Right ventricle myocardium inferior (tissue), 1 donor: ENCODE measurements at regions of chr3 and their contacts with region 1.

Region 1: GRCh38 chr3:197002701-197003454 is 26.7 kb downstream of the MELTF start:
- DNase-seq: peak; percentile 90
- ATAC-seq: peak; percentile 88

Region 2: DNA sequence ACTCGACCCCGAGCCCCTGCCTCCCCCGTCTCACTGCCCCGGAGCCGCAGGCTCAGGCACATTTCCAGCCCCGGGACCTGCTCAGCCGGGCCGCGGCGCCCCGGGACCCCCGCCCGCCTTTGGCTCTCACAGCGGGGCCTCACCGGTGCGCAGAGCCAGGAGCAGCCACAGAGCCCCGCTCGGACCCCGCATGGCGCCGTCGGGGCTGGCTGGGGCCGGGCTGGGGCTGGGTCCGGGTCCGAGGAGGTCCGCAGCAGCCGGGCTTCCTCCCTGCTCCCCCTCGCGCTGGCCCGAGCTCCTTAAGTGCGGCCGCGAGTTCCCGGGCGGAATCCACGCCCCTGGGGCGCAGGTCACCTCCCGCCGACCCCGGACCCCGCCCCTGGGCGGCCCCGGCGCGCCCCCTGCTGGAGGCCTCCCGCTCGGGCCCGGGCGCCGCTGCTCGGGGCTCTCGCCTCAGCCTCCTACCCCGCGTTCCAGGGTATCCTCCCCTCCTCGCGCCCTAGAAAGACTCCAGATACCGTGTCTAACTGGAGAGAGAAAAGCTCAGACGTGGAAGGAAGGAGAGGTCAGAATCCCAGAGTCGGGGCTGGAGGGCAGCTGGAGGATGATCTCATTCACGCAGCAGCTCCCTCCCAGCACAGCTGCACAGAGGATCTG is 26.8 kb after region 1 on chr3 and contains the start of gene MELTF:
- intact Hi-C with region 1: loop called (anchors 1 kb)
- DNase-seq: peak; percentile 86
- ATAC-seq: peak; percentile 73
- total RNA-seq, gene MELTF: 4.0 TPM

Region 3: GRCh38 chr3:197125636-197126035 is 122.8 kb after region 1 on chr3:
- intact Hi-C with region 1: no loop called
- DNase-seq: no peak
- ATAC-seq: no peak

Region 4: GRCh38 chr3:197186887-197187588 is 184.2 kb after region 1 on chr3:
- intact Hi-C with region 1: loop called (anchors 2 kb)
- DNase-seq: no peak
- ATAC-seq: no peak

Region 5: DNA sequence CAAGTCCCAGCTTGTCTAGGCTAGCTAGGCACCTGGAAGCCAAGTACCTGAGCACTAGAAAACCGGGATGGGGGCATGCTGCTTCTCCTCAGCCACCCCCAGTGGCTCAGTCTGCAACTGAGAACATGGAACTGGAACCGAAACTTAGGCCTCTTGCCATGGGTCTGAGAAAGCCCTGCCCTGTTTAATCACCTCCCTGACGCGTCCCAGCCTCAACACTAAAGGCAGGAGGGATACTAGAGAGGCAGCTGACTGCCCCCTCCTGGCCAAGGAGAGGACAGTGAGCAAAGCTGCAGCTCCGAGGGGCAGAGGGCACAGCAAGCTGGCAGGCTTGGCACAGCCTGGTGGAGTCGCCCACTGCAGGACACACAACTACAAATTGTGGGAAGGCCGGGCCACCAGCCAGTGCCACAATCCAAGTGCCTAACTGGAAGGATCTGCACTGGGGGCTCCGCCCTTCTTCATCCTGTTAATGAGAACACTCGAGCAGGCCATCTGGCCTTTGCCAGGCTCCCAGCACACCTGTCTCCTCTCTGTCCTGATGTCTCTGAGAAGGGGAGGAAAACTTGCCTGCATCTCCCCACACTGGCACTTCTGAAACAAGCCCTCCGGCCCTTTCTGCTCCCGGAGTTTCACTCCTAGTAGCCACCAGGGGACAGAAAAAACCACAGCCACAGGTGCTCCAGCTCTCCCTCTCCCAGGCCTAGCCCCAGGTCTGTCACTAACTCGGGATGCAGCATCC is 499.2 kb after region 1 on chr3:
- intact Hi-C with region 1: loop called (anchors 10 kb)
- DNase-seq: no peak
- ATAC-seq: no peak